ENCODE measurements at regions of chr13 and their contacts with region 1.

Region 1: GRCh38 chr13:113393563-113394338 is 29.8 kb upstream of the GRTP1 start:
- DNase-seq: peak; percentile 96
- H3K4me3 Mint-ChIP-seq: peak overlapping the region; percentile 91
- H3K27ac Mint-ChIP-seq: peak overlapping the region; percentile 68
- H3K4me1 Mint-ChIP-seq: peaks cover 4% of the 10 kb centered on the region
- H3K27me3 Mint-ChIP-seq: no peaks in the 10 kb centered on the region

Region 2: DNA sequence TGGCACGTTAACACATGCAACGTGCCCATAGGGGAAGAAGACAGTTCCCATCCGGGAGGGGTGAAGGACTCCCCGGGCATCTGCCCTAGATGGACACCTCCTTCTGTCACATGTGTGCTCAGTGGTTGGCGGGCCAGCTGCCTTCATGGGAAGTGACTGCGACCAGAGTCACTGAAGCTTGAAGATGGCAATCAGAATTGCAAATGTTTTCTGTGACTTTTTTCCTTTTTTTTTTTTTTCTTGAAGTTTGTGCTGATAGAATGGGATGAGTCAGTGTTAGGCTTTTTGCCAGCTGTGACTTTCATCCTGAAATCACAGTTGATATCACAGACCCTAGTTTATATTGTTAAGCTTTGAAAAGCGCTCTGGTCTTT is 533.9 kb before region 1 on chr13:
- intact Hi-C with region 1: no loop called
- DNase-seq: no peak
- H3K4me3 Mint-ChIP-seq: no peak overlapping the region
- H3K27ac Mint-ChIP-seq: no peak overlapping the region
- H3K4me1 Mint-ChIP-seq: peaks cover 2% of the 10 kb centered on the region
- H3K27me3 Mint-ChIP-seq: no peaks in the 10 kb centered on the region

Region 3: GRCh38 chr13:112942689-112943308 is 451.0 kb before region 1 on chr13:
- intact Hi-C with region 1: loop called (anchors 1 kb)
- DNase-seq: peak; percentile 98
- H3K4me3 Mint-ChIP-seq: peak overlapping the region; percentile 80
- H3K27ac Mint-ChIP-seq: no peak overlapping the region
- H3K4me1 Mint-ChIP-seq: peaks cover 6% of the 10 kb centered on the region
- H3K27me3 Mint-ChIP-seq: peaks cover 43% of the 10 kb centered on the region

Region 4: DNA sequence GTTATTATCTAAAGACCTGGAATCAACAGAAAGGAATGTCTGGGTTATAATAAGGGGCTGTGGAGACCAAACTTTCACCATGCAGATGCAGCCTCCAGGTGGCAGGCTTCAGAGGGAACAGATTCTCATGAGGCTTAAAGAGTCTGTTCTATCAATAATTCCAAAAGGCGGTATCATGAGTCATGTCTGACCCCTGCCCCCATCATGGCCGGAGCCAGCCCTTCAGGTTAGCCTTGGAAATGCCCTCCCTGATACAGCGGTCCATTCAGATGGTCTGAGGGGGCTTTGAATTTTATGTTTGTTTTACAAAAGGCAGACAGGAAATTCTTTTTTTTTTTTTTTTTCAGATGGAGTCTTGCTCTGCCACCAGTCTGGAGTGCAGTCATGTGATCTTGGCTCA is 118.4 kb before region 1 on chr13:
- intact Hi-C with region 1: loop called (anchors 1 kb)
- DNase-seq: peak; percentile 72
- H3K4me3 Mint-ChIP-seq: no peak overlapping the region
- H3K27ac Mint-ChIP-seq: no peak overlapping the region
- H3K4me1 Mint-ChIP-seq: peaks cover 2% of the 10 kb centered on the region
- H3K27me3 Mint-ChIP-seq: no peaks in the 10 kb centered on the region

Region 5: DNA sequence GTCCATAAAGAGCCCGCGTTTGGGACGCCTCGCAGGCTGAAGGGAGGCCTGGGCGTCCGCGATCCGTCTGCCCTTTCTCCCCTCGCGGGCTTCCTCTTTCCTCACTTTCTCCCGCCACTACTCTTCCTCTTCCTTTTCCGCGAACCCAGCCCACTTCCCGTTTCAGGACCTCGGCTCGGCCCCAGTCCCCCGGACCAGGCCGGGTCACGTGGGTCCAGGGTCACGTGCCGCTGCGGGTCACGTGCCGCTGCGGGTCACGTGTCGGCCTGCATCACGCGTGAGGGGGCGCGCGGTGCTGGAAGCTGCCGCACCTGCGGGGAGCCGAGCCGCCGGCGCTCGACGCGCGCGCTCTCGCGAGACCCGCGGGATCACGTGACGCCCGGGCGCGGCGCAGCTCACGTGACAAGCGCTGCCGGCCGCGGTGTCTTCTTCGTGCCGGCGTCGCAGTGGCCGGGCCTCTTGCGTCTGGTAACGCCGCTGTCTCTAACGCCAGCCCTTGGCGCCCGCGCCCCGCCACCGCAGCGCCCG is 96.8 kb before region 1 on chr13 and contains the start of gene LAMP1:
- intact Hi-C with region 1: loop called (anchors 1 kb)
- DNase-seq: peak; percentile 100
- H3K4me3 Mint-ChIP-seq: peak within 1 kb of the TSS; percentile 97
- H3K27ac Mint-ChIP-seq: peak within 1 kb of the TSS; percentile 98
- H3K4me1 Mint-ChIP-seq: peaks cover 27% of the 10 kb centered on the region
- H3K27me3 Mint-ChIP-seq: peaks cover 32% of the 10 kb centered on the region
- total RNA-seq, gene LAMP1: 55.3 and 57.5 TPM in 2 replicates

Measured in activated CD4-positive, alpha-beta T cell treated with anti-CD3 and anti-CD28 coated beads, Interleukin-2, amount 10 ng/mL, durations not matched to agents 24 days and 14 days (primary cell).